Esophagus muscularis mucosa (tissue), 4 donors: ENCODE measurements at regions of chr9 and their contacts with region 1.

Region 1: DNA sequence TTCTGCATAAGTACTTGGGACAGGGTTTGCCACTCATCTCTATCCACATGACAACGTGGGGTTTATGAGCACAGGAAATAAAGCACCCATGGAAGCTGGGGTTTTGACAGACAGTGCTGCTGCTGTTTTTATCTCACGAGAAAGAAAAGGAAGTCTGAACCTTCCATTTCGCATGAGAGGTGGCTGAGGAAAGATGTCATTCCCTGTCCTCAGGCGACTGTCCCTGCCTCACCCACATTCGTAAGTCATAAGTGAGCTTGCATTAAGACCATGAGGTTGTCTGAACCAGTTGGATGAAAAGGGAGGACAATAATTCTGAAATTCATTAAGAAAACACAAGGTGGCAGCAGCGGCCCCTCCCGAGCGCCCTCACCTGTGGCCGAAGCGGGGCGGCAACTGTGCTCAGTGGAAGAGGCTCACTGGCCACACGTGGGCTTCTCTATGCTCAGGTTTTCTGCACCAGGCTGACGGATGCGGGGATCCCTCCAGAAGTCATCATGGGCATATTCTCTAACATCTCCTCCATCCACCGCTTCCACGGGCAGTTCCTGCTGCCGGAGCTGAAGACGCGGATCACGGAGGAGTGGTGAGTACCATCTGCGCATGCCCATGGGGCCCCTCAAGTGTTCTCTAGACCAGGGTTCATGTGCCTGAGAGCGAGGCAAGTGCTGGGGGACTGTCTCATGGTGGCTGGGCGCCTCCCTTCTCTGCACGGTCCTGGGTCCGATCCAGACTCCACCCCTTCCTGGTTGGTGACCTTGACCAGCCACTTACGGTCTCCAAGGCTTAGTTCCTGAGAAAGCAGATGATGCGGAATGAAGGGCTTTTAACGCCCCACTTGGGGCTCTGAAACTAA is 54.7 kb upstream of the SUSD3 start:
- DNase-seq: peak; percentile 90
- H3K4me3 ChIP-seq: peak overlapping the region in 3 of 4 donors; percentile 2 to 44 (median 28)
- H3K27ac ChIP-seq: no peak overlapping the region
- H3K4me1 ChIP-seq: peaks cover 0 to 8% (median 6%) of the 10 kb centered on the region in 4 donors
- H3K27me3 ChIP-seq: peaks cover 0 to 5% (median 0%) of the 10 kb centered on the region in 4 donors
- CTCF ChIP-seq: peak; percentile 52 to 72 (median 58)
- EP300 ChIP-seq: no peak
- POLR2A ChIP-seq: no peak

Region 2: DNA sequence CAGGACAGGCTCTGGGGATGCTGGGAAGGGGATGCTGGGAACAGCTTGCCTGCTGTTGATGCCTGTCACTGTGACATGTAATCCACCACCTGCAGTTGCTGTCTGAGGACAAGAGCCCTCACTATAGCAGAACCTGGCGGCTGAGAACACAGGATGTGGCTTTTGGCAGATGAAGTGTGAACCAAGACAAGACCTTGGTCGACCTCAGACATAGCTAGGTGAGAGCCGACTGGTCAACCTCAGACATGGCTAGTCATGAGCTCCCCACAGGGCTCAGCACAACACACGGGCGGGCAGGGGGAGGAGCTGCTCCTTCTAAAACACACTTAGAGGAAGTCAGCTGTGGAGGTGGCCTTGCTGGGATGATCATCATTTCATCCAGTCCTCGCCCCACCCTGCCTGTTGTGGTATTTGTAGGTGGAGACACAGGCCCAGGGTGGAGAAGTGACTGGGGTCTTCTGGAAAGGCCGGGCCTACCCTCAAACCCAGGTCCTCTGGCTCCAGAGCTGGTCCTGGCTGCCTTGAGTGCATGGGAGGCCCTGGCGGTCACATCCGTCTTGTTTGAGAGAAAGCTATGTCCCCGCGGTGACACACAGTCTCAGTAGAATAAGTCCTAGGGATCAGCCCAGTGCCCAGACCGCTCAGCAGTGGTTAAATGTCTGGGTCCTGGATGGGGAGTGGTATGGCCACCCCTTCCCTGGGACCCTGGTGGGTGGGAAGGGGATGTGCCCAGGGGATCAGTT is 60.8 kb after region 1 on chr9:
- intact Hi-C with region 1: no loop called
- DNase-seq: no peak
- H3K4me3 ChIP-seq: no peak overlapping the region
- H3K27ac ChIP-seq: no peak overlapping the region
- H3K4me1 ChIP-seq: peaks cover 2 to 12% (median 10%) of the 10 kb centered on the region in 4 donors
- H3K27me3 ChIP-seq: peaks cover 0 to 6% (median 0%) of the 10 kb centered on the region in 4 donors
- CTCF ChIP-seq: no peak
- EP300 ChIP-seq: no peak
- POLR2A ChIP-seq: no peak

Region 3: DNA sequence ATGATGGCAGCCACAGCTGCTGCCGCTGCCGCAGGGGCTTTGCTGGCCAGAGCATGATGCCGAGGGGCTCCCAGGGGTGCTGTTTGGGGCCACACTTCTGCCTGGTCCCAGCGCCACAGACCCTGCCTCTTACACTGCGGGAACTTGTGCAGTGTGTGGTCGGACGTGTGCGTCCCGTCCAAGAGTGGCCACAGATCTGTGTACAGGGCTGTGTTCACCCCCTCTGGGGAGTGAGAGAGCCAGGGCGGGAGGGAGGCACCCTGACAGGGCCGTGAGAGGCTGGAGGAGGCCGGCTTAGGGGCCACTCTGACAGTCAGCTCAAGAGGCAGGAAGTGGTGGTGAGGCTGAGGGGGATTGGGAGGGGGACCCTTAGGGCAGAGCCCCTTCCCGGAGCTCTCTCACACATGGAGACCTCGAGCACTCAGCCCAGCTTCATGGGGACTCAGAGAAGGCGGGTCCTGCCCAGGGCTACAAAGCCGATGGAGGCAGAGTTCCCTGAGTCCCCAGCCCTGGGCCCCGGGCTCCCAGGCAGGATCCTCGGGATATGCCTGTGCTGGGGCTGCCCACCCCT is 79.1 kb after region 1 on chr9:
- intact Hi-C with region 1: loop called (anchors 10 kb)
- DNase-seq: no peak
- H3K4me3 ChIP-seq: no peak overlapping the region
- H3K27ac ChIP-seq: no peak overlapping the region
- H3K4me1 ChIP-seq: no peaks in the 10 kb centered on the region
- H3K27me3 ChIP-seq: no peaks in the 10 kb centered on the region
- CTCF ChIP-seq: no peak
- EP300 ChIP-seq: no peak
- POLR2A ChIP-seq: no peak